ENCODE measurements at regions of chr1 and their contacts with region 1.

Region 1: DNA sequence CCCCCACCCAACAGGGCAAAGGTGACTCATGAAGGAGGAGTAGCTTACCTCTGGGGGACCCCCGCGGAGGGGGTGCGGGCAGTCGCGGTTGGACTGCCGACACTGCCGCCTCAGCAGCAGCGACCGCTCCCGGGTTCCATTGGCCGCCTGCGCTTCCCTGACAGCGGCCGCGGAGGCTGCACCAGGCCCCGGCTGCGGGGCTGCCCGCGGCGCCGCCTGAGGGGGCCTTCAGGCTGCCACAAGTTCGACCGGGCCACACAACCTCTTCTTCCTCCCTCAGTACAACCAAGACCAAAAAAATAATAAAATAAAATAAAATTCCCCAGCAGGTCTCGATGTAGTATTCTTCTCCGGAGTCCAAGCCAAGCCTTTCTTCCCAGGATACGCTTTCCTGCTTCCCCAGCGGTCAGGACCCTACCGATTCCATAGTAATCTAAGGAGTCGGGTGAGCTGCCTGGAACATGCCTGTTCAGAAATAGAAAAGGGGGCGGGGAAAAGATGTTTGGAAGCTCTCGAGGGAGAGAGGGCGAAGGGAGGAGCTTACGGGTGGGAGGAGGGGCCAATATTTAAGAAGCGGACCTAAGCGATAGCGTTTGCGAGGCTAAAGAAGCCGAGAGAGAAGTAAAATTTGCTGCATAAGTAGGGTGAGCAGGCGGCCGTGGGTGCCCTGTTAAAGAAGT is at the start of gene PI4KB:
- DNase-seq: peak; percentile 95 to 97 (median 97)
- H3K4me3 ChIP-seq: peak within 1 kb of the TSS; percentile 74 to 79
- H3K4me3 Mint-ChIP-seq: peak within 1 kb of the TSS; percentile 92 to 98 (median 97)
- H3K27ac ChIP-seq: peak within 1 kb of the TSS; percentile 84
- H3K27ac Mint-ChIP-seq: peak within 1 kb of the TSS; percentile 90 to 99 (median 99)
- H3K4me1 ChIP-seq: peaks cover 35% of the 10 kb centered on the region
- H3K4me1 Mint-ChIP-seq: peaks cover 31 to 57% (median 40%) of the 10 kb centered on the region in 4 donors
- H3K27me3 ChIP-seq: no peaks in the 10 kb centered on the region
- H3K27me3 Mint-ChIP-seq: no peaks in the 10 kb centered on the region
- total RNA-seq, gene PI4KB: 87.2 to 97.4 TPM

Region 2: GRCh38 chr1:151292207-151293030 is 34.9 kb before region 1 on chr1:
- CTCF ChIA-PET with region 1: interaction called, 3 read pairs
- POLR2A ChIA-PET with region 1: interaction called, 13 read pairs
- intact Hi-C with region 1: no loop called
- DNase-seq: no peak
- H3K4me3 ChIP-seq: no peak overlapping the region
- H3K4me3 Mint-ChIP-seq: no peak overlapping the region
- H3K27ac ChIP-seq: no peak overlapping the region
- H3K27ac Mint-ChIP-seq: peak overlapping the region in 4 of 7 donors; percentile 17 to 84 (median 59)
- H3K4me1 ChIP-seq: no peaks in the 10 kb centered on the region
- H3K4me1 Mint-ChIP-seq: peaks cover 2 to 9% (median 8%) of the 10 kb centered on the region in 4 donors
- H3K27me3 ChIP-seq: no peaks in the 10 kb centered on the region
- H3K27me3 Mint-ChIP-seq: no peaks in the 10 kb centered on the region

Region 3: DNA sequence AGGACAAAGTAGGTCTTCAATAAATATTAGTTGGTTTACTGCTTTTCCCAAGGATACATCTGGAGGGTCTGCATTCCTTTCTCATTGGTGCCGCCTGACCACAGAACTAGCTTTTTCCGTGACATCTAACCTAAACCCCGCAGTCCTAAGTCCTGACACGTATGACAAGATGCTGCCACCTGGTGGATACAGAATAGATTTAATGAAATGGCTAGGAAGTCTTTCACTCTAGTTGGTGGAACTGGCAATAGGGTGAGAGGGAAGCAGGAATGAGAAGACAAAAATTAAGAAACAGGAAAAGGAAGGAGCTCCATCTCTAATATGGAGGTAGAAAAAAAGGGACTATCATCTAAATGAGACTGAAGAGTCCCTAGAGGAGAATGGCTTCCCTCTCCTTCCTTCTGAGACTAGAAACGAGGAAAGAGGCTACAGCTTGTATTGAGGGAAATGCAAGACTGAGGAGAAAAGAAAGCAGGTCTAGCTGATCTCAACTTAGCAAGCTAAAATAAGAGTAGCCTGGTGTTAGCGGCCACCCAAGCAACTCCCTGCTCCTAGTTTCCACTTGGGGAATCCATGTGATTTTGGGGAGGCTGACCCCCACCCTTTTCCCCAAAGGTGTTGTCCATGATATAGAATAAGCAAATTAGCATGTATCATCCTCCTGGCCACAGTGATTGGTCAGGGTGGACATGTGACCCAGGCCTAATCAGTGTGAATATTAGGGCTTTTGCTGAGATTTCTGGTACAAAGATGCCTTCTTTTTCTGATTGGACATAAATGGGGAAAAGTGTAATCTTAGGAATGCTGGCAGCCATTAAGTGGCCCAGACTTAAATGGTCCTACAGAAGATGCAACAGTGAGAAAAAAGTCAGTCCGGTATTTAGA is 13.7 kb after region 1 on chr1:
- CTCF ChIA-PET with region 1: interaction called, 105 read pairs
- POLR2A ChIA-PET with region 1: interaction called, 32 read pairs
- intact Hi-C with region 1: no loop called
- DNase-seq: peak; percentile 66 to 75 (median 69)
- H3K4me3 ChIP-seq: no peak overlapping the region
- H3K4me3 Mint-ChIP-seq: peak overlapping the region in 2 of 8 donors; percentile 4 to 22
- H3K27ac ChIP-seq: peak overlapping the region; percentile 31
- H3K27ac Mint-ChIP-seq: peak overlapping the region; percentile 1 to 83 (median 52)
- H3K4me1 ChIP-seq: peaks cover 21% of the 10 kb centered on the region
- H3K4me1 Mint-ChIP-seq: peaks cover 17 to 29% (median 21%) of the 10 kb centered on the region in 4 donors
- H3K27me3 ChIP-seq: no peaks in the 10 kb centered on the region
- H3K27me3 Mint-ChIP-seq: no peaks in the 10 kb centered on the region

Region 4: GRCh38 chr1:151399890-151400495 is 72.6 kb after region 1 on chr1:
- CTCF ChIA-PET with region 1: interaction called, 4 read pairs
- POLR2A ChIA-PET with region 1: interaction called, 15 read pairs
- intact Hi-C with region 1: loop called (anchors 1 kb)
- DNase-seq: peak in 2 of 5 donors; percentile 22 to 41
- H3K4me3 ChIP-seq: peak overlapping the region; percentile 80 to 85
- H3K4me3 Mint-ChIP-seq: peak overlapping the region; percentile 90 to 99 (median 95)
- H3K27ac ChIP-seq: peak overlapping the region; percentile 97
- H3K27ac Mint-ChIP-seq: peak overlapping the region; percentile 86 to 100 (median 99)
- H3K4me1 ChIP-seq: peaks cover 23% of the 10 kb centered on the region
- H3K4me1 Mint-ChIP-seq: peaks cover 14 to 31% (median 18%) of the 10 kb centered on the region in 4 donors
- H3K27me3 ChIP-seq: no peaks in the 10 kb centered on the region
- H3K27me3 Mint-ChIP-seq: no peaks in the 10 kb centered on the region